Caco-2 (cell line): ENCODE measurements at regions of chr11 and their contacts with region 1.

Region 1: DNA sequence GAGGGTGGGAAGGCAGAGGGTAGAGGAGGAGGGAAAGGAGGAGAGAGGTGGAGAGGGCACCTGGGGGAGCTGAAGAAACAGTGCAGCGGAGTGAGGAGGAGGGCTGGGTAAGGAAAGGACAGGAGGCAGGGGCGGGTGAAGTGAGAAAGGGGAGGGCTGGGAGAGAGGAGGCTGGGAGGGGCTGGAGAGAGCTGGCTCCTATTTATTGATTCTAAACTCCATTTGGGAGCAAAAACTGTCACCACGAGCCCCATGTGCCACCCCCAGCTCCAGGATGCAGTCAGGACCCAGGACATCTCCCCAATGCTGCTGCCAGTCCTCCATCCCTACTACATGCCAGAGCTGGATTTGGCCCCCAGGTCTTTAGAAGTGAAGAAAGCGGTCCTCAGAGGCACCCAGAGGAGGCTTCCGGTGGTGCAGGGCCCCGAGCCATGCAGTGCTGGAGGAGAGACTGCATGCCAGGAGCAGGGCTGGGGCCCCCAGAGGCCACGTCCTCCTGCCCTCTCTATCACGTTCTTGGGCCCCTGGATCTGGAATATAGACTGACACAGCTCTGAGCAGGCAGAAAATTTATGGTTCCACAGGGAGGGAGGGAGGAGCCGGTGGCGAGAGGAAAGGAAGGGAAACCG is 53.7 kb downstream of the SLC22A12 start:
- DNase-seq: peak in 1 of 2 experiments; percentile 34
- H3K4me3 ChIP-seq: no peak overlapping the region
- H3K4me3 Mint-ChIP-seq: no peak overlapping the region
- H3K27ac Mint-ChIP-seq: no peak overlapping the region
- H3K4me1 ChIP-seq: 0 out of 2 replicates have a peak, but pooled peaks cover 9% of the 10 kb centered on the region
- H3K4me1 Mint-ChIP-seq: no peaks in the 10 kb centered on the region
- H3K27me3 ChIP-seq: no peaks in the 10 kb centered on the region; the same call in 1 of the 2 replicates
- H3K27me3 Mint-ChIP-seq: peaks cover 3% of the 10 kb centered on the region
- CTCF ChIP-seq: peak; percentile 19 to 26

Region 2: GRCh38 chr11:64553551-64554201 is 91.1 kb before region 1 on chr11:
- CTCF ChIA-PET with region 1: interaction called, 11 read pairs
- POLR2A ChIA-PET with region 1: no interaction called
- intact Hi-C with region 1: loop called (anchors 1 kb)
- DNase-seq: peak in 1 of 2 experiments; percentile 74
- H3K4me3 ChIP-seq: no peak overlapping the region
- H3K4me3 Mint-ChIP-seq: peak overlapping the region; percentile 32
- H3K27ac Mint-ChIP-seq: peak overlapping the region; percentile 91
- H3K4me1 ChIP-seq: peaks cover 48% of the 10 kb centered on the region
- H3K4me1 Mint-ChIP-seq: peaks cover 39% of the 10 kb centered on the region
- H3K27me3 ChIP-seq: no peaks in the 10 kb centered on the region
- H3K27me3 Mint-ChIP-seq: peaks cover 4% of the 10 kb centered on the region
- CTCF ChIP-seq: peak; percentile 96 to 97

Region 3: DNA sequence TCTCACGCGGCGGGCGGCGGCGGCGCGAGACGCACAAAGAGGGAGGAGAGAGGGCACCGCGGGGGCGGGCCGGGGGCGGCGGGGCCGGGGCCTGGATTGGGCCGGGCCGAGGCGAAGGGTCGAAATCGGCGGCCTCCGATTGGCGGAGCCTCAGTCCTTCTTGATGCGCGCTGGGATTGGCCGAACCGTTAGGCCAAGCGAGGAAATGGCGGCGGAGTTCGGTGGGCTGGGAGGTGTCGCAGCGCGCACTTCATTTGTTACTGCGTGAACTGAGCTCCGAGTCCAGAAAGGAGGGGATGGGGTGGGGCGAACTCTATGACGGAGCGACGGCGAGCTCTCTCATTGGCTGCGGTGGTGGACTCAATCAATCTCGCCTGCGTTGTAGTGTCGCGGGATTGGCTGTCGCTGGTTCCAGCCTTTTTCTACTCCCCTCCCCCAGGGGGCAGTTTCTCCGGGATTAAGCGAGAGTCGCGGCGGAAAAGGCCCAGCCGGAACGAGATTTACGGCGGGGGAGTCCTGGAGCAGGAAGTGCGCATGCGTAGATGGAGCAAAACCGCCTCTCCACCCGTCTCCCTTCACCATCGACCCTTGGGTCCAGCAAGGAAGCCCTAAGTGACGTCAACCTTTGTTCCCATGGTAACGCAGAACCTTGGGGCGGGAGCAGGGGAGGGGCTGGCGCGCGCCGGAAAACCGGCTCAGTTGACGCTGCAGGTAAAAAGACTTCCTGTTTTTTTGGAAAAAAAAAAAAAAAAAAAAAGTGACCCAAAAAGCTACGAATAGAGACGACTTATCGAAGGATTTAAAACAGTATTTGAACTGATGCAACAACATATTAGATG is 134.0 kb after region 1 on chr11 and contains the start of gene SF1:
- CTCF ChIA-PET with region 1: no interaction called
- POLR2A ChIA-PET with region 1: no interaction called
- intact Hi-C with region 1: no loop called
- DNase-seq: peak; percentile 100
- H3K4me3 ChIP-seq: peak within 1 kb of the TSS; percentile 99
- H3K4me3 Mint-ChIP-seq: peak within 1 kb of the TSS; percentile 91
- H3K27ac Mint-ChIP-seq: peak within 1 kb of the TSS; percentile 99
- H3K4me1 ChIP-seq: peaks cover 17% of the 10 kb centered on the region
- H3K4me1 Mint-ChIP-seq: peaks cover 7% of the 10 kb centered on the region
- H3K27me3 ChIP-seq: no peaks in the 10 kb centered on the region
- H3K27me3 Mint-ChIP-seq: no peaks in the 10 kb centered on the region
- CTCF ChIP-seq: no peak
- total RNA-seq, gene SF1: 359 and 386 TPM in 2 replicates